Cardiac septum (tissue), 1 donor: ENCODE measurements at regions of chr7 and their contacts with region 1.

Region 1: DNA sequence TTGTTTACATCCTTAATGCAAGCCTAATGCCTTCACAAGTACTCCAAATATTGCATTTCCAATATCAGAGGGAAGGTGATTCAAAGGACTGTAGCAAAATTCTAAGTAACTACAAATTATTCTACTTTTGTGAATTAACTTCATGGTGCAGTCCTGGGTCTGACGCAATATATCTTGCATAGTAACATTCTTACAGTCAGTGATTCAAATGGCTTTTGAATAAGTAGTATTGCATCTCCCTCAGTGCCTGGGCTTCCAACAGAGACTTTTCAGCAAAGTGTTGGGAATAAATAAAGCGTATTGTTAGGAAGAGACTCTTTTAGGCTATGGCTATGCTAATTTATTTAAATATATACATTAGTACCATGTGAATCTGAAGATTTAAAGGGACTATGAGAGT is 564.7 kb upstream of the COBL start:
- DNase-seq: no peak

Region 2: GRCh38 chr7:51732951-51733350 is 148.4 kb before region 1 on chr7:
- intact Hi-C with region 1: loop called (anchors 5 kb)
- DNase-seq: no peak